Mammary epithelial cell (primary cell): ENCODE measurements at regions of chr12 and their contacts with region 1.

Region 1: DNA sequence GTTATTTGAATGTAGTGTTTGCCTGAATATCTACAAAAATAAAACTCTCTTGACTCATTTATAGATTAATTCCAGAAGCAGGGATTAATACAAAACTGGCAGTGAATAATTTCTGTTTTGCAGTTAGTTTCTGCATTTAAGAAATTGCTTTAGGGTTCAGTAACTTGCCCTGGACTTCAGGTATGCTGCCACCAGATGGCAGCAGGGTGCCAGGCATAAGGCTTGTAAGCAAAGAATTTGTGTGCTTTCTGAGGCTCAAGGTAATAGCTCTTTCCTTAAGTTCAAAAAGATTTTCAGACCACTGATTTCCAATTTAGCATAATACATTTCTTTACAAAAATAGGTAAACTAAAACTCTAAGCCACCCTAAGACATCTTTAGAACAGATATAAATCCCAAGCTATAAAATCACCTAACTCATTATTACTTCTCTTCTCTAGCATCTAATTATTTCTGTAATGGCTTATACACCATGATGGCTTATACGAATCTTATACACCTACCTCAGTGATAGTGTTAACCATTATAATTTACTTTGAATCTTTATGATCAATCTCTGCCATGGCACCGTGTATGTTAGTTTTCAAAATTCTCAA is 398.3 kb downstream of the APAF1 start:
- DNase-seq: peak; percentile 40
- H3K4me3 ChIP-seq: no peak overlapping the region
- H3K27ac ChIP-seq: no peak overlapping the region
- H3K4me1 ChIP-seq: no peaks in the 10 kb centered on the region
- H3K27me3 ChIP-seq: no peaks in the 10 kb centered on the region
- CTCF ChIP-seq: peak; percentile 92 to 97

Region 2: DNA sequence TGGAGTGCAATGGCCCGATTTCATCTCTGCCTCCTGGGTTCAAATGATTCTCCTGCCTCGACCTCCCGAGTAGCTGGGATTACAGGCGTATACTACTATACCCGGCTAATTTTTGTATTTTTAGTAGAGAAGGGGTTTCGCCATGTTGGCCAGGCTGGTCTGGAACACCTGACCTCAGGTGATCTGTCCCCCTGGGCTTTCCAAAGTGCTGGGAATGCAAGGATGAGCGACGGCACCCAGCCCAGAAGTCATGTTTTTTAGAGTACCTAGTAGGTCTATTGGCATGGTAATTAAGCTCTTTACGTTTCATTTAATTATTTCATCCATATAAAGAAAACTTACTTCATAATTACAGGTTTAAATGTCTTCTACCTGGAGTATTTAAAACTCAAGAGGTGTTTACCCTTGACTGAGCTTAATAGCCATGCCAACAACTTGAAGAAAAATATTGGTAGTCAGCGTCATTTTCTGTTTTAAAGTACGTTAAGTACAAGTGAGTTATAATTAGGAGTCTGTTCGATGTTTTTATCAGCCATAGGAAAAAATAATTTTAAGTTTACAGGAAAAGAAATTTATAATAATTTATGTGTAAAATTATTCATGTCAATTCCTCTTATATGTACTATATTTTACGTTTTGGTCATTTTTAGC is 524.0 kb before region 1 on chr12:
- CTCF ChIA-PET with region 1: no interaction called
- dilution Hi-C with region 1: no loop called
- in situ Hi-C with region 1: no loop called
- intact Hi-C with region 1: no loop called
- DNase-seq: no peak
- H3K4me3 ChIP-seq: no peak overlapping the region
- H3K27ac ChIP-seq: no peak overlapping the region
- H3K4me1 ChIP-seq: no peaks in the 10 kb centered on the region
- H3K27me3 ChIP-seq: no peaks in the 10 kb centered on the region
- CTCF ChIP-seq: no peak

Region 3: DNA sequence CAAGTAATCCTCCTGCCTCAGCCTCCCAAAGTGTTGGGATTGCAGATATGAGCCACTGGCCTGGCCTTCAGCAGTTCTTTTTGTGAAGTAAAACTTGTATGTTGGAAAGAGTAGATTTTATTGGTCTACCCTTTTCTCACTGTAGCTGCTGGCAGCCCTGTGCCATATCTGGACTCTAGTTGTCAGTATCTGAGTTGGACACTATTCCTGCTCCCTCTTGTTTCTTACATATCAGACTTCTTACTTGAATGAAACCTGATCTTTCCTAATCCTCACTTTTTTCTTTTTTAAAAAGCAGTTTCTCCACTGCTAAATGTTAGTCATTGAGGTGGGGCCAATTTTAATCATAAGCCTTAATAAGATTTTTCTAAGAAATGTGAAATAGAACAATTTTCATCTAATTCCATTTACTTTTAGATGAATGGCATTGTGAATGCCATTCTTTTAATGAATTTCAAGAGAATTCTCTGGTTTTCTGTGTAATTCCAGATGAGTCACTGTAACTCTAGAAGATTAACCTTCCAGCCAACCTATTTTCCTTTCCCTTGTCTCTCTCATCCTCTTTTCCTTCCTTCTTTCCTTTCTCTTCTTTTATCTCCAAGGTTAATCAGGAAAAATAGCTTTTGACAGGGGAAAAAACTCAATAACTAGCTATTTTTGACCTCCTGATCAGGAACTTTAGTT is 309.6 kb before region 1 on chr12:
- CTCF ChIA-PET with region 1: no interaction called
- dilution Hi-C with region 1: no loop called
- in situ Hi-C with region 1: no loop called
- intact Hi-C with region 1: no loop called
- DNase-seq: no peak
- H3K4me3 ChIP-seq: no peak overlapping the region
- H3K27ac ChIP-seq: no peak overlapping the region
- H3K4me1 ChIP-seq: no peaks in the 10 kb centered on the region
- H3K27me3 ChIP-seq: no peaks in the 10 kb centered on the region
- CTCF ChIP-seq: no peak

Region 4: DNA sequence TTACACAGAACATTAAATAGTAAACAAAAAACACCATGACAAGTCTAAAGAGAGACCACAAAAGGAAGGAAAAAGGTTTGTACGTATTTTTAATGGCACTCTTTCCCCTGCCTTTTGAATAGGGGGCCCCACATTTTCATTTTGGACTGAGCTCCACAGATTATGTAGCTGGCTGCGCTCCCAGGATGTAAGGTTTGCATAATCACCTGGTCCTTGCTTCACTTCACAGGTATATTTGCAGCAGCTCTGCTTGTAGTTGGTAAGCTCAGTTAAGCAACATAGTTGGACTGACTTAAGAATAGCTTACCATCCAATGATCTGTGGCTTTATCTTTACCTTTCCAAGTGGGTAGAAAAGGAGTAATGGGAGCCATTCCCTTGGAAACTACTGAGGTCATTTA is 56.4 kb after region 1 on chr12:
- CTCF ChIA-PET with region 1: no interaction called
- dilution Hi-C with region 1: no loop called
- in situ Hi-C with region 1: loop called in 1 of 2 experiments (anchors 10 kb)
- intact Hi-C with region 1: no loop called
- DNase-seq: no peak
- H3K4me3 ChIP-seq: no peak overlapping the region
- H3K27ac ChIP-seq: no peak overlapping the region
- H3K4me1 ChIP-seq: no peaks in the 10 kb centered on the region
- H3K27me3 ChIP-seq: no peaks in the 10 kb centered on the region
- CTCF ChIP-seq: no peak

Region 5: DNA sequence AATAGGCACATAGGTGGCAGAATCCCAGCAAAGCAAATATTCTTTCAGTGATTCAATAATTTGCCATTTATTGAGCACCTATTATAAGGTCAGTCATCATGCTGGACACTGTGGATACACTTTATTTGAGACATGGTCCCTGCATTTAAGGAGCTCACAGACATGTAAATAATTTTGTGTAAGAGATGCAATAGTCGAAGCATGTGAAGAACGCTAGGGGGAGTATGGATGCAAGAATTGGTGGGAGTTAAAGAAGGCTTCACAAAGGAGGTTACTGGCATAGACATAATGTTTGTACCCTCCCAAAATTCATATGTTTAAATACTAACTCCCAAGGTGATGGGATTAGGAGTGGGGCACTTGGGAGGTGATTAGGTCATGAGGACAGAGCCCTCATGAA is 343.5 kb after region 1 on chr12:
- CTCF ChIA-PET with region 1: no interaction called
- dilution Hi-C with region 1: no loop called
- in situ Hi-C with region 1: no loop called
- intact Hi-C with region 1: loop called (anchors 5 kb)
- DNase-seq: peak; percentile 11
- H3K4me3 ChIP-seq: no peak overlapping the region
- H3K27ac ChIP-seq: no peak overlapping the region
- H3K4me1 ChIP-seq: no peaks in the 10 kb centered on the region
- H3K27me3 ChIP-seq: peaks cover 3% of the 10 kb centered on the region
- CTCF ChIP-seq: peak; percentile 6 to 14

Region 6: DNA sequence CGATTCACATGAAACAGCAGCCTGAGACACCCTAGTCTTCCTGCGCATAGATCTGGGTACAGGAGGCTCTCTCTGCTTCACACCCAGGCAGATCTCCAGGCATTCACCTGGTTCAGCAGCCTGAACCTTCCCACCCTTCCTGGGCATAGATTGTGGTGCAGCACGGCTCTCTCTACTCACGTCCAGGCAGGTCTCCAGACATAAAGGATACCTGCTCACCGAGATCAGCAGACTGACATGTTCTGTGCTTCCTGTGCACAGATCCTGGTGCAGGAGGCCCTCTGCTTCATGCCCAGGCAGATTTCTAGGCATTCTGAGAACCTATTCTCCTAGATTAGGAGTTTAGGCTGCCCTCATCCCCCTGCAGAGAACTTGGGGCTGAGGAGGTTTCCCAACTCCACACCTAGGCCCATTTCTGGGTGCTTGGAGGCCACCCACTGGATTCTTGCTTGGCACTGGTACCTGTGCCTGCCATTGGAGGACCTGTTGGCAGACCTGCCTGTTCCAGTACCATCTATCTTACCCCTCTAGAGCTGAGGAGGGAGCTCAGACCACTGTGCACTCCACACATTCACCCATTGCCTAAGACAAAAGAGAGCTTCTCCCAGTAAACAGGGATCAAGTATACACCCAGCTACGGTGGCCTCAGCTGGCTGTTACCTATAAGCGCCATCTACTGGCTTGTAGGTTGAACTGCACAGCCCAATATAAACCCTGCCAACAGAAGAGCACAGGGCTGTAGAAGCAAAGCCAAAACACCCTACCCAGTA is 576.2 kb after region 1 on chr12:
- CTCF ChIA-PET with region 1: no interaction called
- dilution Hi-C with region 1: no loop called
- in situ Hi-C with region 1: no loop called
- intact Hi-C with region 1: loop called (anchors 1 kb)
- DNase-seq: peak; percentile 37
- H3K4me3 ChIP-seq: no peak overlapping the region
- H3K27ac ChIP-seq: no peak overlapping the region
- H3K4me1 ChIP-seq: no peaks in the 10 kb centered on the region
- H3K27me3 ChIP-seq: no peaks in the 10 kb centered on the region
- CTCF ChIP-seq: peak; percentile 51 to 81

Region 7: DNA sequence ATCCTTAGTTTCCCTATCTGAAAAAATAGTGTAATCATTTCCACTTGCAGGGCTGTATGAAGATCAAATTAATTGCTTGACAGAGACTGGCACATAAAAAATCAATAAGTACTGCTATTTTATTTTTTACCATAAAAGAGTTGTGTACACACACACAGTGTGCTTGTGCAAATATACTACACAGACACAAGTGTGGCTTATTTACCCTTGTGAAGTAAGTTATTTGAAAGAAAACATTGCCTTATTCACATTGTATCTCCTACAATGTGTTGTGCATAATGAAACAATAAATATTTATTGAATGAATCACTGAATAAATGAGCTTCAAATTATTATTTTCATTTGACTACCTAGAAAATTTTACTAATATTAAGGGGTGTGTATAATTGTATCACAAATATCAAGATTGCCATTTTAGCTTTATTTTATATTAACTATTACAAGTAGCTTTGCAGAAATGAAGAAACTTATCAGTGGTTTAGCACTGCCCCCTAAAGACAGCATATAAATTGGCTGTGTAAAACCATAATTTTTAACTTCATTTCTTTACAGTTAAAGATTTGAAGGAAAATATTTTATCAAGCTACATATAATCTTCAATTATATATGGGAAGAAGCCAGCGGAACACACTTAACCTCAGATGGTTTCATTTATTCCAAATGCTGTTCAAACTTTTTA is 615.4 kb after region 1 on chr12:
- CTCF ChIA-PET with region 1: interaction called, 4 read pairs
- dilution Hi-C with region 1: no loop called
- in situ Hi-C with region 1: no loop called
- intact Hi-C with region 1: loop called (anchors 2 kb)
- DNase-seq: no peak
- H3K4me3 ChIP-seq: no peak overlapping the region
- H3K27ac ChIP-seq: no peak overlapping the region
- H3K4me1 ChIP-seq: no peaks in the 10 kb centered on the region
- H3K27me3 ChIP-seq: no peaks in the 10 kb centered on the region
- CTCF ChIP-seq: peak in 1 of 2 donors; percentile 33

Region 8: DNA sequence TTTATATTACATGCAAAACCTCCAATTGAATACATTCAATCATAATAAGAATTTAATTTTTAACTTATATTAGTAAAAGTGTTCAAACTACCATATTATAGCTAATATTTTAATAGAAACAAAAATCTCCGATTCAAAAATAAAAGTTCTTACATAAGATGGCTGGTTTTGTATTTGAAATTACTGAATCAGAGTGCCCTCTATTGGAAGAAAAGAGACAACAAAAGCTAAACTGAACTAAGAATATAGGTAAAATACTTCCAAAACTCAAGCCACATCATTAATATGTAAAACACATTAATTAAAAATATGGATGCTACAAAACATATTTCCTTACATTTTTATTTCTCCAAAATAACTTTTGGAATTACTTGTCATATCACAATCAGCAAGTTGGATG is 724.4 kb after region 1 on chr12:
- CTCF ChIA-PET with region 1: no interaction called
- dilution Hi-C with region 1: no loop called
- in situ Hi-C with region 1: loop called (anchors 10 kb)
- intact Hi-C with region 1: loop called (anchors 1 kb)
- DNase-seq: peak; percentile 5
- H3K4me3 ChIP-seq: no peak overlapping the region
- H3K27ac ChIP-seq: no peak overlapping the region
- H3K4me1 ChIP-seq: no peaks in the 10 kb centered on the region
- H3K27me3 ChIP-seq: no peaks in the 10 kb centered on the region
- CTCF ChIP-seq: peak; percentile 41 to 56